AG04450 (cell line): ENCODE measurements at regions of chr12 and their contacts with region 1.

Region 1: GRCh38 chr12:68617160-68617926 is 6.6 kb downstream of the RAP1B start:
- DNase-seq: no peak
- H3K4me3 ChIP-seq: no peak overlapping the region
- H3K27ac ChIP-seq: peak overlapping the region; percentile 59
- H3K27me3 ChIP-seq: no peaks in the 10 kb centered on the region
- CTCF ChIP-seq: no peak

Region 2: GRCh38 chr12:68331869-68332727 is 285.2 kb before region 1 on chr12 and contains the start of gene MDM1:
- CTCF ChIA-PET with region 1: no interaction called
- POLR2A ChIA-PET with region 1: interaction called, 14 read pairs
- DNase-seq: peak; percentile 95
- H3K4me3 ChIP-seq: peak within 1 kb of the TSS; percentile 83
- H3K27ac ChIP-seq: no peak within 1 kb of the TSS
- H3K27me3 ChIP-seq: no peaks in the 10 kb centered on the region
- CTCF ChIP-seq: no peak
- polyA plus RNA-seq, gene MDM1: 8.1 and 13.5 TPM in 2 replicates

Region 3: GRCh38 chr12:68686595-68687521 is 69.5 kb after region 1 on chr12 and contains the start of gene NUP107:
- CTCF ChIA-PET with region 1: no interaction called
- POLR2A ChIA-PET with region 1: no interaction called
- DNase-seq: peak; percentile 99
- H3K4me3 ChIP-seq: peak within 1 kb of the TSS; percentile 97
- H3K27ac ChIP-seq: peak within 1 kb of the TSS; percentile 92
- H3K27me3 ChIP-seq: no peaks in the 10 kb centered on the region
- CTCF ChIP-seq: peak; percentile 38
- polyA plus RNA-seq, gene NUP107: 31.5 and 46.7 TPM in 2 replicates